PC-9 (cell line): ENCODE measurements at regions of chr3 and their contacts with region 1.

Region 1: DNA sequence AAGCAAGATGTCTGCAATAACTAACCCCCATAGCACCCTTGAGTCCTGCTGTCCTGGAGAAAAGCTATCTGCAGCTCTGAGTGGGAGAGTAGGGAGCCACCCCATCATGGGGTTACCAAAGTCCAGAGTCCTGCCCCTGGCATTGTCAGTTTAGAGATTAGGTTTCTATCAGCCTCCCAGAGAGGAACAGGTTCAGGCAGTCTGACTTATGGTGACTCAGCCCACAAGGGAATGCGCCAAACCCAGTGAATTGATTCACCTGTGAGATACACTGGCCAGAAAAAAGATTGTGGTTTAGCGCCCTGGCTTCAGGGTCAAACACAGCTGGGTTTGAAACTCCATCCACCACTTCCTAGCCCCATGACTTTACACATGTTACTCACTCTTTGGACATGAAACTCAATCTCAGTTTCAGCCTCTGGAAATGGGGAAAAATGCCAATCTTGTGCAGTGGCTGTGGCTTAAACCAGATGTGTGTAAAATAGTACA is 263.6 kb upstream of the HES1 start:
- DNase-seq: peak; percentile 94 to 100
- H3K4me3 ChIP-seq: no peak overlapping the region; the same call in 1 of the 2 replicates
- H3K27ac ChIP-seq: peak overlapping the region; percentile 94
- H3K4me1 ChIP-seq: peaks cover 83% of the 10 kb centered on the region
- H3K27me3 ChIP-seq: no peaks in the 10 kb centered on the region
- CTCF ChIP-seq: no peak

Region 2: GRCh38 chr3:193788189-193788991 is 83.9 kb before region 1 on chr3:
- CTCF ChIA-PET with region 1: interaction called, 3 read pairs
- POLR2A ChIA-PET with region 1: interaction called, 4 read pairs
- intact Hi-C with region 1: loop called (anchors 1 kb)
- DNase-seq: peak in 1 of 2 experiments; percentile 55
- H3K4me3 ChIP-seq: no peak overlapping the region
- H3K27ac ChIP-seq: no peak overlapping the region
- H3K4me1 ChIP-seq: peaks cover 47% of the 10 kb centered on the region
- H3K27me3 ChIP-seq: no peaks in the 10 kb centered on the region
- CTCF ChIP-seq: peak; percentile 43; the same call in 1 of the 2 replicates

Region 3: DNA sequence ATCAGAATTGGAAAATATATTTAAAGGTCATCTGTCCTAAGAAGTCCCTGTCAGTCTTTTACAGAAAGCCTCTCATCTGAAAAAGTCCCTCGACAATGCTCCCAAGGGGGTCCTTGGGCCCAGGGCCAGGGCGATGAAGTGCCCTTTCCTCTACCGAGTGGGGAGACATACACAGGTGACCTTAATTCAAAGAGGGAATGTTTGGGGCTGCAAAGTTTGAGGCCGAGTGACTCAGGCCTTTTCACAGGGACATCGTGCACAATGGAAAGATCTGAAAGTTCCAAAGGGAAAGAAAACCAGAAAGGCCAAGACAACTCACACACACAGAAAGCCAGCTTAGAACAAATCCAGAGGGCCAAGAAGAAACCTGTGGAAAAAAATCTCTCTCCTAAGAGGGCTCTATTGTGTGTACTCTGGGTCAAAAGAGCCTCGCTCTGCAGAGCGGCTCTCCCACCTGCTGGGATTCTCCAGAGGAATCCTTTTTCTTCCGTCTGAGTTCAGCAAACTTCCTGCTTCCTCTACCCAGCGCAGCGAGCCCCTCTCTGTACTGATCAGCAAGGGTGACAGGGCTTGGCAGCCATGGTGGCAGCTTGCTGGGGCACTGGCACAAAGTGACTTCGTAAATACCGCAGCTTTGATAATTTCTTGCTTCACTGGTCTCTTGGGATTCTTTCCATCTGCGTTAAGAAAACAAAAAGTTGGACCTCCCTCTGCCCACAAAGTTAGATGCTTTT is 20.2 kb before region 1 on chr3:
- CTCF ChIA-PET with region 1: interaction called, 11 read pairs
- POLR2A ChIA-PET with region 1: interaction called, 21 read pairs
- intact Hi-C with region 1: loop called (anchors 1 kb)
- DNase-seq: peak; percentile 82 to 98
- H3K4me3 ChIP-seq: peak overlapping the region; percentile 49
- H3K27ac ChIP-seq: peak overlapping the region; percentile 98
- H3K4me1 ChIP-seq: peaks cover 70% of the 10 kb centered on the region
- H3K27me3 ChIP-seq: no peaks in the 10 kb centered on the region
- CTCF ChIP-seq: no peak

Region 4: DNA sequence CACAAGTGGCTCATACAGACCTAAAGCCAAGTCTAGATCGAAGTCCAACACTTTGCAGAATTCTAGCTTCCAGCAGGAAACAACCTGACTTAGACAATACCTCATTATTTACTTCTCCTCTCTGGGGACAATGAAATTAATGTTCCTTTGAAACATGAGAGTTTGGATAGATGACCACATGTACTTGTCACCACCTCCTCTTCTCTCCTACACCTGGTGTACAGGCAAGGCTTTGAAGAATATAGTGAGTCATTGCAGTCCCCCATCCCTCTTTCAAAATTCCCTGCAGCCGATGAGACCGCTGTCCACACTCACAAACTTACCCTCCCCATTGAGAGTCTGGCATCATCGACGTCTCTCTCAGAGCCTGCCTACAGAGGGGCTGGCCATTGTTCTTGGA is 74.6 kb after region 1 on chr3:
- CTCF ChIA-PET with region 1: no interaction called
- POLR2A ChIA-PET with region 1: interaction called, 9 read pairs
- intact Hi-C with region 1: loop called (anchors 1 kb)
- DNase-seq: peak; percentile 83 to 87
- H3K4me3 ChIP-seq: no peak overlapping the region
- H3K27ac ChIP-seq: no peak overlapping the region
- H3K4me1 ChIP-seq: peaks cover 16% of the 10 kb centered on the region
- H3K27me3 ChIP-seq: no peaks in the 10 kb centered on the region
- CTCF ChIP-seq: no peak

Region 5: GRCh38 chr3:194070634-194071409 is 198.5 kb after region 1 on chr3:
- CTCF ChIA-PET with region 1: interaction called, 3 read pairs
- POLR2A ChIA-PET with region 1: no interaction called
- intact Hi-C with region 1: loop called (anchors 5 kb)
- DNase-seq: peak; percentile 92 to 97
- H3K4me3 ChIP-seq: peak overlapping the region; percentile 59; the same call in 1 of the 2 replicates
- H3K27ac ChIP-seq: peak overlapping the region; percentile 74
- H3K4me1 ChIP-seq: peaks cover 47% of the 10 kb centered on the region
- H3K27me3 ChIP-seq: no peaks in the 10 kb centered on the region
- CTCF ChIP-seq: no peak

Region 6: DNA sequence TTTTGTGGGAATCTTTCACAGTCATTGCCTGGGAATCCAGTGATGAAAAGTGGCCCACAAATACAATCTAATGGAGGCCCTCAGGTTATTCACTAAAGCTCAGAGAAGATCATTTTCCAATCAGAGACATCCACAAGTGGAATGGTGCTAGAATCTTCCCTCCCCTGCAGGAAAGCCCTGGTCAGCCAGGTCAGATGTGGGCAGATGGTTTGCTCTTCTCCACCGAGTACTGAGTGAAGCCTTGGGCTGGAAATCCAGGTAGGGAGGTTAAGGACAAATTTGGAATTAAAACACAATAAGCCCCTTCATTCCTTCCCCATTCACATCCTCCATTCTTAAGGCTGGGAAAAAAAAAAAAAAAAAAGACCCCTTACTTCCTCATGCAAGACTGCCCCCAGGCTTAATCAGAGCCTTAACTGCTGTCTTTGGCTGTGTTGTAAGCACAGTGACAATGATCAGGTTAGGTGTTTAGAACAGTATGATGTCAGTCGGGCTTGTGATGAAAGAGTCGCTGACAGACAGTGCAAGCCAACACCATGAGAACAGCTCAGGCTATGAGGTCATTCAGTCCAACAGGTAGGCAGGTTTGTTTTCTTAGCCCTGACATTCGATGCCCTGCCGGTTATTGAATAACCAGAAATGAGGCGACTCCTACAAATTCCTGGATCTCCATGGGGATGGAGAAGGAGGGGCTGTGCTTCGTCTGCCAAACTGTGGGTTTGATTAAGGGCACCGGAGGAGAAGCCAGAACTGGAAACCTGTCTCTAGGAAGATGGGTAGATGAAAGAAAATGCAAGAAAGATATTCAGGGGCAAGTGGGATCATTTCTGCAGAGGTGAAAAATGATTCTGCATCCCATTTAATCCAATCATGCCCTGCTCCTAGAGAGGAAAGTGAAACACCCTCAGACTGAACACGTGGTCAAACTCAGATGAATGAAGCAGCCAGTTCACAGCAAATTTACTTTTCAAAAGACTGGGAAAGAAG is 240.1 kb after region 1 on chr3:
- CTCF ChIA-PET with region 1: no interaction called
- POLR2A ChIA-PET with region 1: no interaction called
- intact Hi-C with region 1: no loop called
- DNase-seq: peak; percentile 85 to 100
- H3K4me3 ChIP-seq: peak overlapping the region; percentile 2; the same call in 1 of the 2 replicates
- H3K27ac ChIP-seq: peak overlapping the region; percentile 38
- H3K4me1 ChIP-seq: peaks cover 18% of the 10 kb centered on the region
- H3K27me3 ChIP-seq: no peaks in the 10 kb centered on the region
- CTCF ChIP-seq: no peak

Region 7: GRCh38 chr3:194212845-194213320 is 340.6 kb after region 1 on chr3:
- CTCF ChIA-PET with region 1: no interaction called
- POLR2A ChIA-PET with region 1: no interaction called
- intact Hi-C with region 1: loop called (anchors 2 kb)
- DNase-seq: peak; percentile 93 to 97
- H3K4me3 ChIP-seq: no peak overlapping the region
- H3K27ac ChIP-seq: peak overlapping the region; percentile 49
- H3K4me1 ChIP-seq: peaks cover 27% of the 10 kb centered on the region
- H3K27me3 ChIP-seq: no peaks in the 10 kb centered on the region
- CTCF ChIP-seq: no peak